ENCODE measurements at regions of chr22 and their contacts with region 1.

Region 1: DNA sequence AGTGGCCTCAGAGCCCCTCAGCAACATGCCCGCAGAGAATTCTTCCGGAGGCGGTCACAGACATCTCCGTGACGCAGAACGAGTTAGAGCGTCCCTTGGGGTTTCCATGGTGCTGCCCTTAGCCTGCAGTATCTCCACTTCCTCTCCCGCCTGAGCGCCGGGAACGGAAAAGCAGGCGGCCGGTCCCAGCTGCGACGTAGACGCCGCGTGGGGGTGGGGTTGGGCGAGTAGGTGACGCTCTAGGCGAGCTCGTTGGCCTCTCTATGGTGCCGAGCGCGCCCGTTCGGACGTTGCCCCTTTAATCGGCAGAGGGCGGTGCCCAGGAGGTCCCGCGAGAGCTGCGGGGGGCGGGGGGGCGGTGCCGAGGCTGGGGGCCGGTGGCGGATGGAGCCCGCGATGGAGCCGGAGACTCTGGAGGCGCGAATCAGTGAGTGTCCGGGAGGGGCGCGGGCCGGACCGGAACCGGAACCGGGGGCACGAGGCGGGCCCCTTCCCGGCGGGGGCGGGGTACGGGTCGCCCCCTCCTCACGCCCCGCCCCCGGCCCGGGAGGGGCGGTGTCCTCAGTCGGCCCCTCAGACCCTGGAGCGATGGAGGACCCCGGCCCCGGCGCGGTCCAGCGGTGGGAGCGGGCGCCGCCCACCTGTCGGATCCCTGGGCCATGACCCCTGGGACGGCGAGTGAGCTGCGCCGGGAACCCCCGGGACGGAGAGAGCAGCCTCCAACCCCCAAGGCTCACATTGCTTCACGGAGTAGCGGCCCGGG is at the start of gene GGA1:
- DNase-seq: peak; percentile 99
- H3K4me3 Mint-ChIP-seq: peak within 1 kb of the TSS; percentile 99
- H3K27ac Mint-ChIP-seq: peak within 1 kb of the TSS; percentile 98
- H3K4me1 Mint-ChIP-seq: peaks cover 40% of the 10 kb centered on the region
- H3K27me3 Mint-ChIP-seq: peaks cover 3% of the 10 kb centered on the region
- total RNA-seq, gene GGA1: 75.8 and 77.2 TPM in 2 replicates

Region 2: GRCh38 chr22:37484133-37484824 is 124.4 kb before region 1 on chr22:
- intact Hi-C with region 1: loop called (anchors 1 kb)
- DNase-seq: peak; percentile 95
- H3K4me3 Mint-ChIP-seq: peak overlapping the region; percentile 94
- H3K27ac Mint-ChIP-seq: peak overlapping the region; percentile 96
- H3K4me1 Mint-ChIP-seq: peaks cover 43% of the 10 kb centered on the region
- H3K27me3 Mint-ChIP-seq: no peaks in the 10 kb centered on the region

Region 3: GRCh38 chr22:37643225-37643847 is 34.7 kb after region 1 on chr22:
- intact Hi-C with region 1: loop called (anchors 1 kb)
- DNase-seq: peak; percentile 96
- H3K4me3 Mint-ChIP-seq: peak overlapping the region; percentile 63
- H3K27ac Mint-ChIP-seq: peak overlapping the region; percentile 65
- H3K4me1 Mint-ChIP-seq: peaks cover 30% of the 10 kb centered on the region
- H3K27me3 Mint-ChIP-seq: no peaks in the 10 kb centered on the region

Region 4: GRCh38 chr22:37664249-37665101 is 55.8 kb after region 1 on chr22:
- intact Hi-C with region 1: no loop called
- DNase-seq: no peak
- H3K4me3 Mint-ChIP-seq: no peak overlapping the region
- H3K27ac Mint-ChIP-seq: no peak overlapping the region
- H3K4me1 Mint-ChIP-seq: peaks cover 24% of the 10 kb centered on the region
- H3K27me3 Mint-ChIP-seq: no peaks in the 10 kb centered on the region

Region 5: GRCh38 chr22:37676736-37677492 is 68.3 kb after region 1 on chr22:
- intact Hi-C with region 1: loop called (anchors 1 kb)
- DNase-seq: peak; percentile 97
- H3K4me3 Mint-ChIP-seq: peak overlapping the region; percentile 92
- H3K27ac Mint-ChIP-seq: peak overlapping the region; percentile 97
- H3K4me1 Mint-ChIP-seq: peaks cover 56% of the 10 kb centered on the region
- H3K27me3 Mint-ChIP-seq: no peaks in the 10 kb centered on the region

Region 6: DNA sequence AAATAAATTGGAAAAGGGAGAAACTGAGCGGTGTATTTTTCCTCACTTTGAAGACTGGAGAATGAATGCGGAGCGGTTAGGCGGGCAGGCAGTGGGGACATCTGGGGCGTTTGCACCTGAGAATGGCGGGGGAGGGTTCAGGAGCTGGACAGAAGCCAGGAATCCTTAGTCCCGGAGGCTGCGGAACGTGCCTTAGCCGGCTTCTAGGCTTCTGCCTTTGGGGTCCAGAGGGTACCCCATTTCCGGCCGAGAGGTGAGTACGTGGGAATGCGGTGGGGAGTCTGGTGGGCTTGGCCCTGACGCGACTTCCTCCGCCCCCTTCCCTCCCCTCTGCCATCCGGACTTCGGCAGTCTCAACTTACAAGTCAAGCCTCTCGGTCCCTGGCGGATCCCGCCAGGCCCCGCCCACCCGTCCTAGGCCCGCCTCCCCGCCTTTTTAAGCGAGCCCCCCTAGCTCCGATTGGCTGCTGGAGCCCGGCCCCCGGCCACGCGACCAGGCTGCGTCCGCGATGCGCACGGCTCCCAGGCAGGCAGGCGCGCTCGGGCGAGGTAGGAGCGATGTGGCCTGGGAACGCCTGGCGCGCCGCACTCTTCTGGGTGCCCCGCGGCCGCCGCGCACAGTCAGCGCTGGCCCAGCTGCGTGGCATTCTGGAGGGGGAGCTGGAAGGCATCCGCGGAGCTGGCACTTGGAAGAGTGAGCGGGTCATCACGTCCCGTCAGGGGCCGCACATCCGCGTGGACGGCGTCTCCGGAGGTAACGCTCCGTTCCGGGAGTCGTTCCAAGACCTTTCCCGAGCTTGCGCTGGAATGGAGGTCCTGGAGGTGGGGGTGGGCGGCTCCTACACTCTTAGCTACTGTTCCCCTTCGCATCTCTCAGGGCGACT is 199.0 kb after region 1 on chr22 and contains the start of gene GCAT:
- intact Hi-C with region 1: loop called (anchors 5 kb)
- DNase-seq: peak; percentile 97
- H3K4me3 Mint-ChIP-seq: peak within 1 kb of the TSS; percentile 94
- H3K27ac Mint-ChIP-seq: peak within 1 kb of the TSS; percentile 15
- H3K4me1 Mint-ChIP-seq: peaks cover 36% of the 10 kb centered on the region
- H3K27me3 Mint-ChIP-seq: peaks cover 23% of the 10 kb centered on the region
- total RNA-seq, gene GCAT: 27.7 and 28.9 TPM in 2 replicates